Adrenal gland (tissue), 19 donors: ENCODE measurements at regions of chr11 and their contacts with region 1.

Region 1: GRCh38 chr11:74255741-74256369 is 55.6 kb downstream of the P4HA3 start:
- DNase-seq: peak; percentile 28 to 77 (median 54)
- H3K4me3 ChIP-seq: no peak overlapping the region
- H3K27ac ChIP-seq: no peak overlapping the region
- H3K4me1 ChIP-seq: no peaks in the 10 kb centered on the region
- H3K27me3 ChIP-seq: no peaks in the 10 kb centered on the region
- CTCF ChIP-seq: peak; percentile 82 to 92 (median 84)
- POLR2A ChIP-seq: no peak

Region 2: DNA sequence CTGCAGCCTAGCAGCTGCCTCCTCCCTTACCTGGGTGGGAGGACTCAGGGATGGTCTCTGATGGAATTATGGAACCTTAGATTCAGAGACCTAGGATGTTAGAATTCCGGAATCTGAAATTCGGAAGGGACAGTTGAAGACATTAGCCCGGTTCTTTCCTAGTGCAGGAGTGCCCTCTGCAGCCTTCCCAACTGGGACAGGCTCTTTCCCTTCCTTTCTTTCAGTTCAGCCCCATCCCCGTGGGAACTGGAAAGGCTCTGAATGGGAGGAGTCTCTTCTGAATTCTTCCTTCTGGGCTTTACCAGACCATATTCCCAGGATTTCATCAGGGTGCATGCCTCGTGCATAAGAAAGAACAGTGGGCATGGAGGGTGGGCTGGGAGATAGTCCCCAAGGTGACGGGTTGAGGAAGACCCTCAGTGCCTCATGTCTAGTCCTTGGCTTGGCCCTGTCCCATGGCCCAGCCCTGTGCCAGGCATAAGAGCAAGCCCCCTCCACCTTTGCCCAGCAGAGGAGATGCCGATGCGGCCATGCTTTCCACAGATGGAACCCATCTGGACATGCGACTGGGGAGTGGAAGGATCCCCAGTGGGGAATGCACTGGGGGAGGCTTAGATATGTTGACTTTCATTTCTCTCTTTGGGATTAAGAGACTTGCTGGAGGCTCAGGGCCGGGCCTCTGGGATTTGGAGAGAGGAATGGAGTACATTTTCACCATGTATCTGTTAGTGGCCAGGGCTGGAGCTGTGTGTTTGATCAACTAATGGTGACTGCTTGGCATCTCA is 290.6 kb before region 1 on chr11:
- intact Hi-C with region 1: loop called in 1 of 2 experiments (anchors 10 kb)
- DNase-seq: peak in 1 of 7 donors; percentile 10
- H3K4me3 ChIP-seq: no peak overlapping the region
- H3K27ac ChIP-seq: no peak overlapping the region
- H3K4me1 ChIP-seq: no peaks in the 10 kb centered on the region
- H3K27me3 ChIP-seq: no peaks in the 10 kb centered on the region
- CTCF ChIP-seq: no peak
- POLR2A ChIP-seq: no peak

Region 3: GRCh38 chr11:74203966-74204365 is 51.9 kb before region 1 on chr11:
- intact Hi-C with region 1: no loop called
- DNase-seq: no peak
- H3K4me3 ChIP-seq: no peak overlapping the region
- H3K27ac ChIP-seq: no peak overlapping the region
- H3K4me1 ChIP-seq: peaks cover 0 to 4% of the 10 kb centered on the region in 2 donors
- H3K27me3 ChIP-seq: no peaks in the 10 kb centered on the region
- CTCF ChIP-seq: no peak
- POLR2A ChIP-seq: no peak

Region 4: GRCh38 chr11:74321487-74322188 is 65.8 kb after region 1 on chr11:
- intact Hi-C with region 1: loop called (anchors 5 to 10 kb)
- DNase-seq: peak in 6 of 7 donors; percentile 34 to 56 (median 46)
- H3K4me3 ChIP-seq: no peak overlapping the region
- H3K27ac ChIP-seq: peak overlapping the region in 1 of 5 donors; percentile 63
- H3K4me1 ChIP-seq: peaks cover 5 to 51% of the 10 kb centered on the region in 2 donors
- H3K27me3 ChIP-seq: no peaks in the 10 kb centered on the region
- CTCF ChIP-seq: peak; percentile 53 to 62 (median 54)
- POLR2A ChIP-seq: no peak

Region 5: GRCh38 chr11:74449369-74449931 is 193.6 kb after region 1 on chr11:
- intact Hi-C with region 1: loop called (anchors 5 kb)
- DNase-seq: peak; percentile 48 to 75 (median 67)
- H3K4me3 ChIP-seq: no peak overlapping the region
- H3K27ac ChIP-seq: no peak overlapping the region
- H3K4me1 ChIP-seq: no peaks in the 10 kb centered on the region
- H3K27me3 ChIP-seq: no peaks in the 10 kb centered on the region
- CTCF ChIP-seq: peak; percentile 52 to 87 (median 84)
- POLR2A ChIP-seq: no peak

Region 6: GRCh38 chr11:74559934-74560309 is 304.1 kb after region 1 on chr11:
- intact Hi-C with region 1: loop called (anchors 10 kb)
- DNase-seq: no peak
- H3K4me3 ChIP-seq: no peak overlapping the region
- H3K27ac ChIP-seq: no peak overlapping the region
- H3K4me1 ChIP-seq: no peaks in the 10 kb centered on the region
- H3K27me3 ChIP-seq: peaks cover 3% of the 10 kb centered on the region
- CTCF ChIP-seq: no peak
- POLR2A ChIP-seq: no peak